Prostate gland (tissue), 2 donors: ENCODE measurements at regions of chr17 and their contacts with region 1.

Region 1: GRCh38 chr17:9291912-9292560 is 270.7 kb downstream of the NTN1 start:
- DNase-seq: peak; percentile 46
- H3K4me3 ChIP-seq: no peak overlapping the region
- H3K27ac ChIP-seq: peak overlapping the region; percentile 22 to 41
- H3K4me1 ChIP-seq: no peaks in the 10 kb centered on the region
- H3K27me3 ChIP-seq: no peaks in the 10 kb centered on the region
- CTCF ChIP-seq: peak; percentile 47 to 88 (median 68)
- POLR2A ChIP-seq: no peak

Region 2: GRCh38 chr17:9239793-9240658 is 52.0 kb before region 1 on chr17:
- intact Hi-C with region 1: loop called (anchors 5 kb)
- DNase-seq: peak; percentile 72
- H3K4me3 ChIP-seq: peak overlapping the region; percentile 33 to 48
- H3K27ac ChIP-seq: peak overlapping the region; percentile 86 to 90
- H3K4me1 ChIP-seq: no peaks in the 10 kb centered on the region
- H3K27me3 ChIP-seq: no peaks in the 10 kb centered on the region
- CTCF ChIP-seq: peak in 1 of 4 experiments; percentile 4
- POLR2A ChIP-seq: peak; percentile 68

Region 3: GRCh38 chr17:9484789-9485188 is 192.8 kb after region 1 on chr17:
- intact Hi-C with region 1: no loop called
- DNase-seq: no peak
- H3K4me3 ChIP-seq: no peak overlapping the region
- H3K27ac ChIP-seq: no peak overlapping the region
- H3K4me1 ChIP-seq: no peaks in the 10 kb centered on the region
- H3K27me3 ChIP-seq: no peaks in the 10 kb centered on the region
- CTCF ChIP-seq: no peak
- POLR2A ChIP-seq: no peak